ENCODE measurements at regions of chr10 and their contacts with region 1.

Region 1: DNA sequence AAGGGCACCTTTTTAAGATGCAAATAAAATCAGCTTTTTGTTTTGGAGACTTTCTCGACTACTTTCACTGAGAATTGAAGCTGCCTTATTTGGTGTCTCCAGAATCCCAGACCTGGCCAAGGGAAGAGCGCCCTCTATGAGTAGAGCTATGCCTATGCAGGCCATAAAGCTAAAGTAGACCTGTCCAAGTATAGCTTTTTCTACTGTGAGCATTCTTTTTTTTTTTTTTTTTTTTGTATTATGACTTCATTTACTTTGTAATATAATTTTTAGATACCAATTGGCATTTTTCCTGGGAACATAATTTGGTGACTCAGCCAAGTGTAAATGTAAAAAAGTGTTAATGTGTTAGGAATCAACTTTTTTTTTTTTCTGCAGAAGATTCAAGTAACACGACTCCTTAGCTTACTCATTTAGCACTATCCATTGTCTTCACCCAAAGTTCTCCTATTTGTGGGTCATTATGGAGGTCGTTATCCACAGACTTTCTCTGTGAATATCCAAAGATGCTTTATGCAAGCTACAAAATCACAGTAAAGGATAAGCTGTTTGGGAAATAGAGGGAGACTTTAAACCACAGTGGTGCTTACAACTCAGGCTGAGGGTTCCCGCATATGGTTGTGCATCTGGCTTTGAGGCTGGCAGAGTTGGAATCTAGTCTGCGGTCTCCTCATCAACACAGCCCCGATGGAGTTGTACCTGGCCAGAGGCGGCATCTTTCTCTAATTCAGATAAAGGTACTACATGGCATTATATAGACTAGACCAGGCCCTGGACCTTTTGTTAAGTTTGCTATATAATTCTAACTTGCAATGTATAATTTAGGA is 1040.2 kb upstream of the SORCS1 start:
- DNase-seq: peak; percentile 11
- ATAC-seq: peak; percentile 95
- H3K4me3 ChIP-seq: no peak overlapping the region
- H3K27ac ChIP-seq: no peak overlapping the region
- H3K4me1 ChIP-seq: no peaks in the 10 kb centered on the region
- H3K27me3 ChIP-seq: no peaks in the 10 kb centered on the region
- CTCF ChIP-seq: peak; percentile 72 to 85 (median 80)
- EP300 ChIP-seq: no peak
- POLR2A ChIP-seq: no peak
- RAD21 ChIP-seq: peak; percentile 90

Region 2: DNA sequence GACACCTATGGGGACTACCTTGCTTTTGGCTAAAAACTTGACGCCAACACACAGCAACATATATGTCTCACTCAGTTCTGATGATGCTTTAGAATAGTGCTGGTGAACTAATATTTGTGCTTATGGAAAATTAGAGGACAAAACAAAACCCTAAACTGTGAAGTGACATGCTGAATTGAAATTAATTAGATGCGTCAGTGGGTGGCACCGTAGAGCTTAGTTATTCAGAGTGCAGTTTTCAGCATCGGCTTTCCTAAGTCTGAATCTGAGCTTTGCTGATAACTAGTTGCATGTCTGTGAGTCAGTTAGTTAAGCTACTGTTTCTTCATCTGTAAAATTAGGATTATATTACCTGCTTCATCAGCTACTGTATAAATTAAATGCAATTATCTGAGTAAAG is 795.2 kb before region 1 on chr10:
- CTCF ChIA-PET with region 1: interaction called, 51 read pairs
- POLR2A ChIA-PET with region 1: no interaction called
- RAD21 ChIA-PET with region 1: interaction called, 71 read pairs
- SMC1A ChIA-PET with region 1: interaction called, 46 read pairs
- in situ Hi-C with region 1: no loop called
- intact Hi-C with region 1: no loop called
- DNase-seq: no peak
- ATAC-seq: peak; percentile 81
- H3K4me3 ChIP-seq: no peak overlapping the region
- H3K27ac ChIP-seq: no peak overlapping the region
- H3K4me1 ChIP-seq: no peaks in the 10 kb centered on the region
- H3K27me3 ChIP-seq: no peaks in the 10 kb centered on the region
- CTCF ChIP-seq: peak; percentile 32 to 64 (median 47); a peak in 5 of 6 replicates
- EP300 ChIP-seq: no peak
- POLR2A ChIP-seq: no peak
- RAD21 ChIP-seq: peak; percentile 88

Region 3: GRCh38 chr10:107859065-107859464 is 345.6 kb before region 1 on chr10:
- CTCF ChIA-PET with region 1: interaction called, 7 read pairs
- POLR2A ChIA-PET with region 1: no interaction called
- RAD21 ChIA-PET with region 1: interaction called, 17 read pairs
- SMC1A ChIA-PET with region 1: interaction called, 7 read pairs
- in situ Hi-C with region 1: no loop called
- intact Hi-C with region 1: no loop called
- DNase-seq: no peak
- ATAC-seq: peak; percentile 69
- H3K4me3 ChIP-seq: no peak overlapping the region
- H3K27ac ChIP-seq: no peak overlapping the region
- H3K4me1 ChIP-seq: no peaks in the 10 kb centered on the region
- H3K27me3 ChIP-seq: no peaks in the 10 kb centered on the region
- CTCF ChIP-seq: no peak
- EP300 ChIP-seq: no peak
- POLR2A ChIP-seq: no peak
- RAD21 ChIP-seq: no peak

Region 4: DNA sequence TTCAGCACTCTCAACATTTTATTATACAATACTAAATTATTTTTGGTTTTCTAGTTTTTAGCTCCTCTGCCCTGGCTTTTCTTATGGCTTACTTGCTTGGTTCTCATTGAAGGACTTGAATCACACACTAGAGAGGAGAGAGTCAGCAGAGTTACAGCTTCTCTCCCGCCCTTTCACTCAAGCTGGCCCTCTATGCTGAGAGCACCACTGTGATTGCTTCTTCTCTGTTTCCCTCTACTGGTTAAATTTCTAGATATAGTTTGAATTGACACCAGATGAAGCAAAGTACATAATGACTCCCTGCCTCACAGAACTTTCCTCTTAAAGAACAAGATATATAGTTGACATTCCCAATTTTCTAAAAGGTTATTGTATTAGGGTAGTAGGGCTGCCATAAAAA is 272.9 kb before region 1 on chr10:
- CTCF ChIA-PET with region 1: interaction called, 25 read pairs
- POLR2A ChIA-PET with region 1: no interaction called
- RAD21 ChIA-PET with region 1: interaction called, 11 read pairs
- SMC1A ChIA-PET with region 1: interaction called, 16 read pairs
- in situ Hi-C with region 1: no loop called
- intact Hi-C with region 1: no loop called
- DNase-seq: no peak
- ATAC-seq: no peak
- H3K4me3 ChIP-seq: no peak overlapping the region
- H3K27ac ChIP-seq: no peak overlapping the region
- H3K4me1 ChIP-seq: no peaks in the 10 kb centered on the region
- H3K27me3 ChIP-seq: no peaks in the 10 kb centered on the region
- CTCF ChIP-seq: 0 out of 6 replicates have a peak, but pooled peaks of 2 of the 3 experiments have one; percentile 2 to 4
- EP300 ChIP-seq: no peak
- POLR2A ChIP-seq: no peak
- RAD21 ChIP-seq: no peak

Region 5: GRCh38 chr10:108014902-108015177 is 189.9 kb before region 1 on chr10:
- CTCF ChIA-PET with region 1: interaction called, 9 read pairs
- POLR2A ChIA-PET with region 1: no interaction called
- RAD21 ChIA-PET with region 1: interaction called, 8 read pairs
- SMC1A ChIA-PET with region 1: interaction called, 13 read pairs
- in situ Hi-C with region 1: no loop called
- intact Hi-C with region 1: loop called (anchors 5 kb)
- DNase-seq: peak; percentile 65
- ATAC-seq: peak; percentile 95
- H3K4me3 ChIP-seq: no peak overlapping the region
- H3K27ac ChIP-seq: no peak overlapping the region
- H3K4me1 ChIP-seq: no peaks in the 10 kb centered on the region
- H3K27me3 ChIP-seq: no peaks in the 10 kb centered on the region
- CTCF ChIP-seq: no peak
- EP300 ChIP-seq: peak; percentile 94 to 98
- POLR2A ChIP-seq: no peak
- RAD21 ChIP-seq: no peak; the same call in 1 of the 2 replicates

Region 6: GRCh38 chr10:108187408-108188012 is 17.2 kb before region 1 on chr10:
- CTCF ChIA-PET with region 1: interaction called, 14 read pairs
- POLR2A ChIA-PET with region 1: no interaction called
- RAD21 ChIA-PET with region 1: interaction called, 12 read pairs
- SMC1A ChIA-PET with region 1: interaction called, 6 read pairs
- in situ Hi-C with region 1: no loop called
- intact Hi-C with region 1: no loop called
- DNase-seq: no peak
- ATAC-seq: no peak
- H3K4me3 ChIP-seq: no peak overlapping the region
- H3K27ac ChIP-seq: no peak overlapping the region
- H3K4me1 ChIP-seq: no peaks in the 10 kb centered on the region
- H3K27me3 ChIP-seq: no peaks in the 10 kb centered on the region
- CTCF ChIP-seq: no peak
- EP300 ChIP-seq: no peak
- POLR2A ChIP-seq: no peak
- RAD21 ChIP-seq: no peak

Region 7: GRCh38 chr10:108365541-108365940 is 160.8 kb after region 1 on chr10:
- CTCF ChIA-PET with region 1: no interaction called
- POLR2A ChIA-PET with region 1: no interaction called
- RAD21 ChIA-PET with region 1: no interaction called
- SMC1A ChIA-PET with region 1: no interaction called
- in situ Hi-C with region 1: no loop called
- intact Hi-C with region 1: no loop called
- DNase-seq: no peak
- ATAC-seq: no peak
- H3K4me3 ChIP-seq: no peak overlapping the region
- H3K27ac ChIP-seq: no peak overlapping the region
- H3K4me1 ChIP-seq: no peaks in the 10 kb centered on the region
- H3K27me3 ChIP-seq: no peaks in the 10 kb centered on the region
- CTCF ChIP-seq: no peak
- EP300 ChIP-seq: no peak
- POLR2A ChIP-seq: no peak
- RAD21 ChIP-seq: no peak

Region 8: DNA sequence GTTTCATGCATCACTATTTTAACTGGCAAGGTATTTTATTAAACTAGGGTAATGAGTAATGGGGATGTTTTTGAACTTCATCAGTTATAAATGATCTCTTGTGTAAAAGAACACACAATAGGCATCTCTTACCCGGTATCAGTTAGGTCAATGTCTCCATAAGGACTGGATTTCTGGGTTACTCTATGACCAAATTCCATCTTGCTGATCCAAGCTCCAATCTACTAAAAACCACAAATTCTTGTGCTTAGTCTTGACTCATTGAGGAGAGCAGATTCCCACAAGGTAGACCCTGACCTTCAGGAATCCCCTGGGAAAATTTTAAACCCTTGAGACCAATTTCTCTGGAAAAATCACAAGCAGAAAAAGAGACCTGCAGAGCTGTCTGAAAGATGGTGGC is 551.0 kb after region 1 on chr10:
- CTCF ChIA-PET with region 1: no interaction called
- POLR2A ChIA-PET with region 1: no interaction called
- RAD21 ChIA-PET with region 1: no interaction called
- SMC1A ChIA-PET with region 1: no interaction called
- in situ Hi-C with region 1: no loop called
- intact Hi-C with region 1: no loop called
- DNase-seq: no peak
- ATAC-seq: no peak
- H3K4me3 ChIP-seq: no peak overlapping the region
- H3K27ac ChIP-seq: no peak overlapping the region
- H3K4me1 ChIP-seq: no peaks in the 10 kb centered on the region
- H3K27me3 ChIP-seq: no peaks in the 10 kb centered on the region
- CTCF ChIP-seq: no peak
- EP300 ChIP-seq: no peak
- POLR2A ChIP-seq: no peak
- RAD21 ChIP-seq: no peak

Measured in GM12878 (cell line).